HepG2 (cell line): ENCODE measurements at regions of chr20 and their contacts with region 1.

Region 1: GRCh38 chr20:21339499-21339898 is 36.4 kb downstream of the XRN2 start:
- DNase-seq: peak; percentile 83
- ATAC-seq: peak; percentile 82
- H3K4me3 ChIP-seq: no peak overlapping the region
- H3K27ac ChIP-seq: peak overlapping the region; percentile 24
- H3K4me1 ChIP-seq: peaks cover 31% of the 10 kb centered on the region
- H3K27me3 ChIP-seq: no peaks in the 10 kb centered on the region
- CTCF ChIP-seq: no peak
- EP300 ChIP-seq: peak; percentile 20 to 29; a peak in 1 of 4 replicates
- POLR2A ChIP-seq: no peak
- RAD21 ChIP-seq: no peak

Region 2: DNA sequence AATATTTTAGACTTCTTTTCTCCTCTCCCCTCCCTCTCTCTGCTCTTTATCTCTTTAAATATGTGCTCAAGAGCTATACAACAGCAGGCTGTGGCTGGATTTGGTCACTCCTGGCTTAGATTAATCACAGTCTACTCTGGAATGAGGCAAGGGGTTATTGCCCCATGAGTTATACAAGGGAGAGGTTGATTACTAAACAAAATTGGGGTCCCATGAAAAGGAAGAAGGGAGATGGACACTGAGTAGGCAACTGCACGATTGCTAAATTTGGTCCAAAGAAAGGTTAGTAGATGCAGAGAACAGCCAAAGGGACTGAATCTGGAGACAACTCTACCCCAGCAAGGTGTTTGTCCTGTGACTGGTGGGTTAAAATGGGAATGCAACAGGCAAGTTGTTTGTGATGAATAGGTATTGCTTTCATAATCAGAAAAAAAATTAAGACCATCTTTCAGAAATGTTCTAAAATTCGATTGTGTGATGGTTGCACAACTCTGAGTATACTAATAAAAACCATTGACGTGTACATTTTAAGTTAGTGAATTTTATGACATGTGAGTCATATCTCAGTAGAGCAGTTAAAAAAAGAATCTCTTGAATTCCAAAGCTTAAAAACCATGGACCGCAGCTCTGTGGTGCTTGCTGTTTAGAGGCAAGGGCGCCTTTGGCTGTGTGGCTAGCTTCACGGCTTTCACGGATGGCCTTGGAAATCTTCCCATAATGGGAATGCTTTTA is 156.5 kb before region 1 on chr20:
- CTCF ChIA-PET with region 1: no interaction called
- POLR2A ChIA-PET with region 1: no interaction called
- in situ Hi-C with region 1: no loop called
- intact Hi-C with region 1: no loop called
- DNase-seq: no peak
- ATAC-seq: no peak
- H3K4me3 ChIP-seq: no peak overlapping the region
- H3K27ac ChIP-seq: no peak overlapping the region
- H3K4me1 ChIP-seq: peaks cover 24% of the 10 kb centered on the region
- H3K27me3 ChIP-seq: no peaks in the 10 kb centered on the region
- CTCF ChIP-seq: no peak
- EP300 ChIP-seq: no peak
- POLR2A ChIP-seq: no peak
- RAD21 ChIP-seq: no peak

Region 3: DNA sequence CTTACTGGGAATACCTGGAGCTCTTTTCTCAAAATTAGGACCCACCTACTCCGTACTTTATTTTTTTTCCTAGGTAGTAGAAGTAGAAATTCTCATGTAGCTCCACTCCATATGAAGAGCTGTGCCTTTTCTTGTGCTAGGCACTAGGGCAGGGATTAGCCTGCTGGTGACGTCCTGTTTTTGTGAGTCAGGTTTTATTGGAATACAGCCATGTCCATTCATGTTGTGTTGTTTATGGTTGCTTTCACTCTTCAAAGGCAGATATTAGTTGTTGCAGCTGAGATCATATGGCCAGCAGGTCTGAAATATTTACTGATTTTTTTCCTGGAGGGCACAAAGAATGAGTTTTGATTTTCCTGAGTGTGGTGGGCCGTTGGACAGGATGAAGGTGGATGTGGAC is 15.9 kb before region 1 on chr20:
- CTCF ChIA-PET with region 1: no interaction called
- POLR2A ChIA-PET with region 1: no interaction called
- in situ Hi-C with region 1: no loop called
- intact Hi-C with region 1: loop called (anchors 2 kb)
- DNase-seq: no peak
- ATAC-seq: no peak
- H3K4me3 ChIP-seq: no peak overlapping the region
- H3K27ac ChIP-seq: no peak overlapping the region
- H3K4me1 ChIP-seq: peaks cover 31% of the 10 kb centered on the region
- H3K27me3 ChIP-seq: no peaks in the 10 kb centered on the region
- CTCF ChIP-seq: no peak
- EP300 ChIP-seq: no peak
- POLR2A ChIP-seq: no peak
- RAD21 ChIP-seq: no peak

Region 4: DNA sequence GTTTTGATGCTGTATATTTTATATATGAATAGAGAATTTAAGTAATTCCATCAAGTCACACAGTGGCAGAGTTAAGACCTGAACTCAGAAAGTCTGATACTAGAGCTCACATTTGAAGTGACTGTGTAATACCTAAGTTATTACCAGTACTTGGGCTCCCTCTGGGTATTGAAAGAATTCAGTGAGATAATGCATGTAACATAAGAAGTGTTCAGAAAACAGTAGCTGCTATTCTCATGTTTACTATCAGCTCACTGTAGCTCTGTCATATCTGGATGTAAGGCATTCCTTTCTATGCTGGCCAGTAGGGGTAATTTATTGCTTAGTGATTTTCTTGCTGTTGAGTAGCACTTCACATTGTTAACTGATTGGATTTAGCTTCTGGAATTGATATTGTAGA is 13.2 kb after region 1 on chr20:
- CTCF ChIA-PET with region 1: no interaction called
- POLR2A ChIA-PET with region 1: no interaction called
- in situ Hi-C with region 1: no loop called
- intact Hi-C with region 1: loop called (anchors 1 kb)
- DNase-seq: peak; percentile 51
- ATAC-seq: peak; percentile 64
- H3K4me3 ChIP-seq: no peak overlapping the region
- H3K27ac ChIP-seq: no peak overlapping the region
- H3K4me1 ChIP-seq: peaks cover 18% of the 10 kb centered on the region
- H3K27me3 ChIP-seq: no peaks in the 10 kb centered on the region
- CTCF ChIP-seq: no peak
- EP300 ChIP-seq: no peak
- POLR2A ChIP-seq: no peak
- RAD21 ChIP-seq: no peak